PC-3 (cell line): ENCODE measurements at regions of chr1 and their contacts with region 1.

Region 1: GRCh38 chr1:224329842-224330753 is at the start of gene NVL:
- DNase-seq: peak; percentile 96
- ATAC-seq: peak; percentile 88
- H3K4me3 ChIP-seq: peak within 1 kb of the TSS; percentile 94
- H3K27ac ChIP-seq: peak within 1 kb of the TSS; percentile 90
- H3K4me1 ChIP-seq: peaks cover 31% of the 10 kb centered on the region
- H3K27me3 ChIP-seq: no peaks in the 10 kb centered on the region
- CTCF ChIP-seq: no peak
- total RNA-seq, gene NVL: 26.6 and 37.1 TPM in 2 replicates

Region 2: DNA sequence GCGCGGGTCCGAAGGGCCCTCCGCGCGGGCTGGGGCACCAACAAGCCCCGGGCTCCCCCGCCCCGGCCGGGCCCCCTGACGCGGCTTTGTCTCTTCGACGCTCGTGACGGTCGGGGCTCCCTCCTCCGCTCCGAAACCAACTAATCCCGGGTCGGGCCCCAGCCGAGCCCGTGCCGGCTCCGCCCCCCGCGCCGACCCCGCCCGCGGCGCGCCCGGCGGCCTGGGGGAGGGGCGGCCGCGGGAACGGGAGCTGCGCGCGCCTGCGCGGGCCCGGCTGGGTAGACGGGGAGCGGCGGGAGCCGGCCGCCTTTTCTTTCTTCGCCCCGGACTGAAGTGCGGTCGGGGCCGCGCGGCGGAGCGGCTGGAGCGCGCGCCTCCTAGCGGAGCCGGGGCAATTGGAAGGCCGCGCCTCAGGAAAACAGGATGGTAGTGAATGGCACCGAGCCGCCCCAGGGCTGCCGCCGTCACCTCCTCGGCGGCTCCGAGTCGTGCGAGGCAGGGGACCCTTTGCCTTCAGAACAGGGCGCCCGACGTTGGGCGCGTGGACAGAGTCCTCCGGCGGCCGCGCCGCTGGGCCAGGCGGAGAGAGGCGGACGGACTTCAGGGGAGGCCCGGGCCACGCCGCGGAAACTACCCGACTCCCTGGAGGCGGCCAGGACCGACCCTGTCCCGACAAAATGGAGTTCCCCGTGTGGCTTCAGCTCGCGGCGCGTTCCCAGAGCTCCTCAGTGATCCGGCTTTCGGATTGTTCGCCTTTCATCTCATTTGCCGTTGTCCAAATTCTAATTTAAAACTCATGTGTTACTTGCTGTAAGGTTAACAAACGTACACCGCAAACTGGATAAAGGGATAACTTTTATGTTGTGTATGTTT is 484.1 kb before region 1 on chr1 and contains the start of gene TP53BP2:
- CTCF ChIA-PET with region 1: no interaction called
- POLR2A ChIA-PET with region 1: interaction called, 11 read pairs
- intact Hi-C with region 1: no loop called
- DNase-seq: peak; percentile 96
- ATAC-seq: peak; percentile 86
- H3K4me3 ChIP-seq: peak within 1 kb of the TSS; percentile 79
- H3K27ac ChIP-seq: peak within 1 kb of the TSS; percentile 89
- H3K4me1 ChIP-seq: peaks cover 27% of the 10 kb centered on the region
- H3K27me3 ChIP-seq: no peaks in the 10 kb centered on the region
- CTCF ChIP-seq: peak; percentile 71
- total RNA-seq, gene TP53BP2: 24.6 and 32.0 TPM in 2 replicates

Region 3: GRCh38 chr1:224157316-224157715 is 172.8 kb before region 1 on chr1:
- CTCF ChIA-PET with region 1: no interaction called
- POLR2A ChIA-PET with region 1: no interaction called
- intact Hi-C with region 1: no loop called
- DNase-seq: no peak
- ATAC-seq: no peak
- H3K4me3 ChIP-seq: no peak overlapping the region
- H3K27ac ChIP-seq: no peak overlapping the region
- H3K4me1 ChIP-seq: no peaks in the 10 kb centered on the region
- H3K27me3 ChIP-seq: no peaks in the 10 kb centered on the region
- CTCF ChIP-seq: no peak

Region 4: DNA sequence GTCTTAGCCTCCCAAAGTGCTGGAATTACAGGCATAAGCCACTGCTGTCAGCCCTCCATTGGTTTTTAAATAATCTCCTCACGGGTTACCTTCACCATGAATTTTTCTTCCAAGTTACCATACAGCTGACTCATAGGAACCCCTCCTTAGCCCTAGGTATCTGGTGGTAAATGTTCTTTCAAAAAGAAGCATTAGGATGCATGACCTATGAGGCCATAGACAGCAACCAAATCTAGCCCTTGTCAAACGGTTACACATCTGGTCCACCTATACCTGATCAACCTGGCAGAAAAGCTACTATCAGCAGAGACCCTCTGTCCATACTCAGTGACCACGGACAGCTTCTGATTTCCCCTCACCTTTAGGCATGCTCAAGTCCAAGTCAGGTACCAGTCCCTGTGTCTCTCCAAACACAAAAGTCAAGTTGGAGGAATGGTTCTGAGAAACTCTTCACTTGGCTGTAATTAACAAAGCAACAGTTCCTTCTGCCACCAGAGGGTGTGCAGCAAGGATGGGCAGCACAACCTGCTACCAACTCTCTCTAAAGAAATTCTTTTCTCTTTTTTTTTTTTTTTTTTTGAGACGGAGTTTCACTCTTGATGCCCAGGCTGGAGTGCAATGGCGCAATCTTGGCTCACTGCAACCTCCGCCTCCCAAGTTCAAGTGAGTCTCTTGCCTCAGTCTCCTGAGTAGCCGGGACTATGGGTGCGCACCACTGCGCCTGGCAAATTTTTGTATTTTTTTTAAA is 159.6 kb before region 1 on chr1:
- CTCF ChIA-PET with region 1: no interaction called
- POLR2A ChIA-PET with region 1: no interaction called
- intact Hi-C with region 1: loop called (anchors 1 kb)
- DNase-seq: peak; percentile 61
- ATAC-seq: no peak
- H3K4me3 ChIP-seq: no peak overlapping the region
- H3K27ac ChIP-seq: no peak overlapping the region
- H3K4me1 ChIP-seq: peaks cover 22% of the 10 kb centered on the region
- H3K27me3 ChIP-seq: no peaks in the 10 kb centered on the region
- CTCF ChIP-seq: peak; percentile 65

Region 5: DNA sequence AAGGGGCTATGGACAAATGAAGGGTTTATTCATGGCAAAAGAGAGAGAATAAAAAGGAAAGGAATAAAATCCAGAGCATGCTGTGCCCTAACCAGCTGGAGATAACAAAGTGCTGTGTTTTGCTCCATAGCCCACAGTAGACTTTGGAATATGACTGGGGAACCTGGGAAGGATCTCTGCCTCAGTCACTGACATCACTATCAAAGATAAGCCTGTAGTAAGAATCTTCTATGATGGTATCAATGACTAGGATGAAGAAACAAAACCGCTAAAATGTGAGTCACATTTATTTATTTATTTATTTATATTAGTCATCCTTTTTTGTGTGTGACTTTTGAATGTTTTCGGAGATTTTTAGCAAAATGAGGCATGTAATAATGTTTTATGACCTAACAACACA is 56.5 kb before region 1 on chr1:
- CTCF ChIA-PET with region 1: no interaction called
- POLR2A ChIA-PET with region 1: no interaction called
- intact Hi-C with region 1: loop called (anchors 2 kb)
- DNase-seq: peak; percentile 72
- ATAC-seq: peak; percentile 57
- H3K4me3 ChIP-seq: no peak overlapping the region
- H3K27ac ChIP-seq: peak overlapping the region; percentile 45
- H3K4me1 ChIP-seq: peaks cover 7% of the 10 kb centered on the region; the same call in 1 of the 2 replicates
- H3K27me3 ChIP-seq: no peaks in the 10 kb centered on the region
- CTCF ChIP-seq: no peak

Region 6: GRCh38 chr1:225329041-225329440 is 998.9 kb after region 1 on chr1:
- CTCF ChIA-PET with region 1: no interaction called
- POLR2A ChIA-PET with region 1: no interaction called
- intact Hi-C with region 1: no loop called
- DNase-seq: peak; percentile 49
- ATAC-seq: no peak
- H3K4me3 ChIP-seq: no peak overlapping the region
- H3K27ac ChIP-seq: no peak overlapping the region
- H3K4me1 ChIP-seq: peaks cover 7% of the 10 kb centered on the region
- H3K27me3 ChIP-seq: no peaks in the 10 kb centered on the region
- CTCF ChIP-seq: no peak